ENCODE measurements at regions of chr22 and their contacts with region 1.

Region 1: DNA sequence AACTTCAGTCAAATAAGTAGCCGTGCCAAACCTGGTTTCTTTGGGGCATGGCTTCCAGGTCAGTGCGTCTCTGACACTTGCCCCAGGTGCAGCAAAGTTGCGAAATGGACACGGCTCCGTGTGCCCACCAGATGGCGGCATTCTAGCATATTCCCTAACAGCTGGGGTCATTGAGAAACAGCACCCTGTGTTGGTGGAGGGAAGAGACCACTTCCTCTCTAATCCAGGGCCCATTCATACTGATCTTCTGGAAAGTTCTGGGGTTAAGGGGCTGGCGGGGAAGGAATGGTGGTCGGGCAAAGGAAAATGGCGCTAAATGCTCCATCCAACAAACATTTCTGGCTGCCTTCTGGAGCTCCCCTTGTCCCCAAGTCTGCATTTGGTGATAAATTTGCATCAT is 141.2 kb upstream of the TIMP3 start:
- DNase-seq: no peak
- H3K4me3 ChIP-seq: no peak overlapping the region
- H3K27me3 ChIP-seq: no peaks in the 10 kb centered on the region
- CTCF ChIP-seq: peak; percentile 67

Region 2: DNA sequence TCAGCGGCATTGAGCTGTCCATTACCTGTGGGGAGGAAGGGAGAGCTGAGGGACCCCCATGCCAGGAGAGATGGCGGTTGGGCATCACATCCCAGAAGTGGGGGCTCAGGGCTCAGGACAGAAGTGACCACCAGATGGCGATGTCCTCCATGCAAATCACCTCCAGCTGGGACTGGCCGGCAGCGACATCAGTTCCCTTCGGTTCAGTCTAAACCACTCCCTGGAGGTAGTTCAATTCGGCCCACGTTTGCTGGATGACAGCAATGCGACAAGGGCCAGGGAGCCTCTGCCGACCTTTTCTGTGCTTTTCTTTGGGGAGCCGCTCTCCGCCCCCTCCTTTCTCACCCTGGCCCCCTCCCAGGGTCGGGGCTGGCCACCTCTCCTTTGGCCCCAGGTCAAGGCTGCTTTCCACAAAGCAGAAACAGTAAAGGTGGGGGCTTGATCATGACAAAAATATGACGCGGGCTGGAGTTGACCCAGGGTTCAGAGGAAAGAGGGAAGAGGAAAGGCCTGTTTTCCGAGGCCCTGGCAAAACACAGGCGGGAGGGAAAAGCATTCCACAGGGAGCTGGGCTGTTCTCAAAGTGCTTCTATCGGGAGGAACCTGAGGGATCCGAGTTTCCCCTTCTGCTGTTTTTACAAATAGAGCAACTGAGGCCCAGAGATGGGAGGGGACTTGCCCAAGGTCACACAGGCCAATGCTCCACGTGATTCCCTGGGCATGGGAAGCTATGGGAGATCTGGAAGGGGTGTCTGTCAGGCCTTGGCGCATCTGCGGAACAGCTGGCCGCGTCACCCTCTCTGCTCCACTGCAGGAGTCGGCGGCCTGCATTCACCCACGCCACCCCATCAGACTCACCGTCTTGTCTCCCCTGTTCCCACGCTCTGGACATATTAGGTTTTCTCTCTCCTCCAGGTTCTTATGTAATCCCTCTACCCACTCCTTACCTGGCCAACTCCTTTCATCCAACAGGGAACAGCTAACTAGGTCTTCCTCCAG is 131.0 kb before region 1 on chr22:
- CTCF ChIA-PET with region 1: interaction called, 37 read pairs
- POLR2A ChIA-PET with region 1: no interaction called
- DNase-seq: no peak
- H3K4me3 ChIP-seq: no peak overlapping the region
- H3K27me3 ChIP-seq: no peaks in the 10 kb centered on the region
- CTCF ChIP-seq: peak; percentile 84

Region 3: GRCh38 chr22:32534252-32535240 is 125.7 kb before region 1 on chr22:
- CTCF ChIA-PET with region 1: interaction called, 37 read pairs
- POLR2A ChIA-PET with region 1: no interaction called
- DNase-seq: peak; percentile 50
- H3K4me3 ChIP-seq: no peak overlapping the region
- H3K27me3 ChIP-seq: no peaks in the 10 kb centered on the region
- CTCF ChIP-seq: no peak

Region 4: GRCh38 chr22:32622004-32622743 is 38.1 kb before region 1 on chr22:
- CTCF ChIA-PET with region 1: interaction called, 25 read pairs
- POLR2A ChIA-PET with region 1: interaction called, 12 read pairs
- DNase-seq: peak; percentile 81
- H3K4me3 ChIP-seq: peak overlapping the region; percentile 4; the same call in 1 of the 2 replicates
- H3K27me3 ChIP-seq: 0 out of 2 replicates have a peak, but pooled peaks cover 1% of the 10 kb centered on the region
- CTCF ChIP-seq: no peak

Region 5: DNA sequence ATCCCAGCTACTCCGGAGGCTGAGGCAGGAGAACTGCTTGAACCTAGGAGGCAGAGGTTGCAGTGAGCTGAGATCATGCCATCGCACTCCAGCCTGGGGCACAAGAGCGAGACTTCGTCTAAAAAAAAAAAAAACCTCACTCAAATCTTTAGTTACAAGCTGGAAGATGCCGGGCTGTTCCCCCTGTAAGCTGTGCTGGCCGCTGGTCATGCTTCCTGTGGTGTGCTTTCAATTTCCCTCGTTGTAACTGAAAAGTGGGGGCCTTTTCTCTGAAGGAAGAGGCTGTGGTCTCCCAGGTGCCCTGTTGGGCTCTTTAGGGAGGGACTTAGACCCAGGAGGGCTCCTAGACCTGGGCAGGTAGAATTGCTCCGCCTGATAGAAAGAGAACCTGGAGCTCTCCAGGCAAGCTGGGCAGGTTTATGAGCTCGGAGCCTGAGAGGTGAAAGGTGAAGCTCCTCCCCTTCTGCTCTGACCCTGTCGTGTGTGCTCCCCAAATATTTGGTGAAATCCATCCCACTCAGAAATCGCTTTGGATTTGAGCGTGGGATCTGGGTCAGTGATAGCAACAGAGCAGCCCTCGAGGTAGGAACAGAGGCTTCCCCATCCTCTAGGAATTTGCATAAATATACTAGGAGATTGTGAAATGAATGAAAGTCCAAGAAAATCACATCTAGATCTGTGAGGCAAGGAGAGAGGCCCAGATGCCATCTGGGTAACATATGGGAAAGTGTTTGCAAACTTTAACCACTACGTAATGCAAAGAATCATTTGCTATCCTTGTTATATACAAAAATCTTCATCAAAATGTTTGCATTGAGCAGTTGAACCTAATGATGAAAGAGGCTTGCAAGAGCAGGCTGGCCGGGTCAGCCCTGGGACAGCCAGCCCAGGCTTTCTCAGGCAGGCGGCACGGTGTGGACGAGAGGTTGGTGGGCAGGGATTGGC is 31.4 kb before region 1 on chr22:
- CTCF ChIA-PET with region 1: interaction called, 25 read pairs
- POLR2A ChIA-PET with region 1: no interaction called
- DNase-seq: no peak
- H3K4me3 ChIP-seq: no peak overlapping the region
- H3K27me3 ChIP-seq: 0 out of 2 replicates have a peak, but pooled peaks cover 1% of the 10 kb centered on the region
- CTCF ChIP-seq: no peak

Region 6: DNA sequence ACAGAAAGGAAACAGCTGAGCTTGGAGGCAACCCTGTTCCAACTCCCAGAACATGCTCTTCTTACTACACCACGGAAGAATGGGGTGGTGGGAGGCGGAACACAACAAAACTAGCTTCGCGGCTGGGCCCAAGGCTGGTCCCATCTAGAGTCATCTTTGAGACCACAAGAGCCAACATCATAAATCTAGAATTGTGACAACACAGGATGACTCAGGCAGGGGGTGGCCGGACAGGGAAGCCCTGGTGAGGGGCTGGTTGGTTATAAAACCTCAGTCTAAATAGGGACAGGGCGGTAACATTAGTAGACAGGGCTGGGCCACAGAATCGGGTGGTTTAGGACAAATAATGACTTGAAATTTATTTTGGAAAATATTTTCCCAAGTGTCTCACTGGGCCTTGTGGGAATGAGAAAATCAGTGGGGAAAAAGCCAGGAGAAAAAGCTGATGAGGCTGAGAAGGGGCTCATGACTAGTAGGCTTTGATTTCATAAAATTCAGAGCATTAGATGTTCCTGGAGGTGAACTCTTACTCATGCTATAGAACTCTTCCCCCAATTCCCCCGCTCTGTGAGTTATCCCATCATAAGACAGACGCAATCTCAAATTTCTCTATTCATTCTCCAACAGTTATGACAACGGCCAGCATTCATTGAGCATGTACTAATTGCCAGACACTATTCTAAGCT is 10.6 kb before region 1 on chr22:
- CTCF ChIA-PET with region 1: interaction called, 20 read pairs
- POLR2A ChIA-PET with region 1: no interaction called
- DNase-seq: peak; percentile 56
- H3K4me3 ChIP-seq: no peak overlapping the region
- H3K27me3 ChIP-seq: no peaks in the 10 kb centered on the region
- CTCF ChIP-seq: no peak

Region 7: GRCh38 chr22:32674925-32675825 is 14.9 kb after region 1 on chr22:
- CTCF ChIA-PET with region 1: interaction called, 10 read pairs
- POLR2A ChIA-PET with region 1: no interaction called
- DNase-seq: no peak
- H3K4me3 ChIP-seq: no peak overlapping the region
- H3K27me3 ChIP-seq: no peaks in the 10 kb centered on the region; the same call in none of the 2 replicates
- CTCF ChIP-seq: peak; percentile 31